AG04449 (cell line): ENCODE measurements at regions of chr11 and their contacts with region 1.

Region 1: DNA sequence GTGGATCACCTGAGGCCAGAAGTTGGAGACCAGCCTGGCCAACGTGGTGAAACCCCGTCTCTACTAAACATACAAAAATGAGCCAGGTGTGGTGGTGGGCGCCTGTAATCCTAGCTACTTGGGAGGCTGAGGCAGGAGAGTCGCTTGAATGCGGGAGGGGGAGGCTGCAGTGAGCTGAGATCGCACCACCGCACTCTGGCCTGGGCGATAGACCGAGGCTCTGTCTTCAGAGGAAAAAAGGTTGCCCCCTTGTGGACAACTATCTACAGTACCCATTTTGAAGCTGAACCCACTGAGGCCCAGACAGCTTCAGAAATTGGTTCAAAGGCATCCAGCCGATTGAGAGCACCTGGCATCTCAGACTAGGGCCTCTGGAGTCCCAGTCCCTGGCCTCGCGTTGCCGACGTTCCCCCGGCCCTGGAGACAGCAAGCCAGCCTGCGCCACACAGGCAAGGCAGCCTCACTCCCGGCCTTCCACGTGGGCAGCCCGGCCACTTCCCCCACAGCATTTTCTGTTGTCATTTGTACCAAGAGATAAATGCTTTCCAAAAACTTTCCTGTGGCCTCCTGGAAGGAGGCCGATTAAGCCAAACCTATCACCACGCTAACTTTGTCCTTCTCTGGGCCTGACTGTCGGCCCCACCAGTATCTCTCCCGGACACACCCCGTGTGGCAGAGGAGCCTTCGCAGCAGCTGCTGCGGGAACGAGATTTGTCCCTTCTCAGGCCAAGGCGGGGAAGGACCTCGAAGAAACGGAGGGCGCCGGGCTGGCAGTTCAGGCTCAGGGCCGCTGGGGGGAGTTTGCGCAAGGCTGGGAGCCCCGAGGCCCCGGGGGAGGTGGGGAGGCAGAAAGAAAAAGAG is 82.8 kb downstream of the FLI1 start:
- DNase-seq: no peak
- H3K4me3 ChIP-seq: no peak overlapping the region
- CTCF ChIP-seq: peak; percentile 36

Region 2: DNA sequence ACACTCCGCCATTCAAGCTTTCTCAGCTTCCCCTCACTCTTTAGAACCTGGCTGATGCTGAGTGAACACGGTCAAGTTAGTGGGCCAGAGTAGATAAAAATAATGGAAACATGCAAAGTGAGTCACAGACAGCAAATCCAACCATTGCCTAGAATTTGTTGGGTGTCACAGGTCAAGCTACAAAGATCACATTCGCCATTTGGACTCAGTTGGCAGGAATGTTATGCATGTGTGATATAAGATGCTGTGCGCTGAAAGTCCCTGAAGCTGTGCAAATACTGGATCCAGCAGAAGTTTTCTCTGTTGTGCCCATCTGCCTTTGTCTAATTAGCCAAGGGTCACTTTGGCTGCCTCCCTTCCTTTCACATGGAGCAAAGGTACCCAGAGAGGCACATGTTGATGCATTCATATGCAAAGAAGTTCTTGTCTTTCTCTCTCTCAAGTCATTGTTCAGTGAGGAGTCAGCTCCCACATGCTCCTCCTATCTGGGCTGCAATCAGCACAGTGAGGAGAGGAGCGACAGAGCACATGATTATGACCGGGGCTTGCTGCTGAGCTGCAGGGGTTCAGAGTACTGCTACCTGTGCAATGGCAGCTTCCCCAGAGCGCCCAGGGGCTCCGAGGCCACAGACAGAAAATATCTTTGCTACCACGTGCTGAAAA is 43.1 kb before region 1 on chr11:
- CTCF ChIA-PET with region 1: no interaction called
- POLR2A ChIA-PET with region 1: no interaction called
- DNase-seq: no peak
- H3K4me3 ChIP-seq: no peak overlapping the region
- CTCF ChIP-seq: no peak

Region 3: GRCh38 chr11:128765571-128766549 is 10.8 kb before region 1 on chr11:
- CTCF ChIA-PET with region 1: interaction called, 20 read pairs
- POLR2A ChIA-PET with region 1: no interaction called
- DNase-seq: no peak
- H3K4me3 ChIP-seq: no peak overlapping the region
- CTCF ChIP-seq: no peak

Region 4: GRCh38 chr11:128790196-128790595 is 13.5 kb after region 1 on chr11:
- CTCF ChIA-PET with region 1: interaction called, 13 read pairs
- POLR2A ChIA-PET with region 1: no interaction called
- DNase-seq: no peak
- H3K4me3 ChIP-seq: no peak overlapping the region
- CTCF ChIP-seq: no peak

Region 5: GRCh38 chr11:128956401-128957201 is 179.9 kb after region 1 on chr11:
- CTCF ChIA-PET with region 1: no interaction called
- POLR2A ChIA-PET with region 1: no interaction called
- DNase-seq: peak; percentile 26
- H3K4me3 ChIP-seq: no peak overlapping the region
- CTCF ChIP-seq: peak; percentile 57